Activated CD4-positive, alpha-beta T cell treated with anti-CD3 and anti-CD28 coated beads for 36 hours (primary cell): ENCODE measurements at regions of chr9 and their contacts with region 1.

Region 1: GRCh38 chr9:35945341-35946018 is 12.5 kb downstream of the OR2S2 start:
- DNase-seq: peak; percentile 87
- ATAC-seq: peak; percentile 76
- H3K4me3 Mint-ChIP-seq: no peak overlapping the region
- H3K27ac Mint-ChIP-seq: no peak overlapping the region
- H3K4me1 Mint-ChIP-seq: peaks cover 59% of the 10 kb centered on the region
- H3K27me3 Mint-ChIP-seq: no peaks in the 10 kb centered on the region

Region 2: GRCh38 chr9:35891646-35892045 is 53.8 kb before region 1 on chr9:
- CTCF ChIA-PET with region 1: interaction called, 13 read pairs
- POLR2A ChIA-PET with region 1: no interaction called
- intact Hi-C with region 1: no loop called
- DNase-seq: no peak
- ATAC-seq: no peak
- H3K4me3 Mint-ChIP-seq: no peak overlapping the region
- H3K27ac Mint-ChIP-seq: no peak overlapping the region
- H3K4me1 Mint-ChIP-seq: no peaks in the 10 kb centered on the region
- H3K27me3 Mint-ChIP-seq: peaks cover 7% of the 10 kb centered on the region

Region 3: GRCh38 chr9:35910613-35911359 is 34.7 kb before region 1 on chr9:
- CTCF ChIA-PET with region 1: interaction called, 69 read pairs
- POLR2A ChIA-PET with region 1: interaction called, 3 read pairs
- intact Hi-C with region 1: loop called in 1 of 2 experiments (anchors 2 kb)
- DNase-seq: peak; percentile 71
- ATAC-seq: peak; percentile 75
- H3K4me3 Mint-ChIP-seq: no peak overlapping the region
- H3K27ac Mint-ChIP-seq: peak overlapping the region; percentile 80
- H3K4me1 Mint-ChIP-seq: peaks cover 55% of the 10 kb centered on the region
- H3K27me3 Mint-ChIP-seq: no peaks in the 10 kb centered on the region

Region 4: DNA sequence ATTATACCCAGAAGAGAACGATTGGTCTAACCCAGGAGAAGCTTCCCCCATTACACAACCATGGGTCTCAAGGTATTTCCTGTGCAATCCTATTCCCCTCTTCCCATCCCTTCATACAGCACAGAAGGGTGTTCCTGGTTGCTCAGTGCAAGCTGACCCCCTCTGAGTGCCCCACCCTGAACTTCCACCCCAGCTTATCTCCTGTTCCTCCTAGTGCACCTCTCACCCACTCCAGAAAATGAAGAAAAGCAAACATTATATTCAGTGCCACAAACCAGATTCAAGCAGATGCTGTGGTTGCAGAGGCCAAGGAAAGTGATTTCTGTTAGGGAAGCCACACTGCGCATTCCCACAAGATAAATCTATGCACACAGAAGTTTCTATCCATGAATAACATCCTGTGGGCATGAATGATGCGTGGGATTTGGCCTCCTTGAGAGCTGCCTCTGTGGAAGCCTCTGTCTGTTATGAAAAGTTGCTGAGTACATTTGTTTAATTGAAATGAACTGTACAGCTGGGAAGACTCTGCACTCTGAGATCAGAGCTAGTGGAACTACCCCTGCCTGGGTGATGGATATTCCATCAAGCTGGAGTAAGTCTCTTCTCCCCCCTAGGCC is 14.7 kb after region 1 on chr9:
- CTCF ChIA-PET with region 1: interaction called, 27 read pairs
- POLR2A ChIA-PET with region 1: no interaction called
- intact Hi-C with region 1: no loop called
- DNase-seq: no peak
- ATAC-seq: no peak
- H3K4me3 Mint-ChIP-seq: no peak overlapping the region
- H3K27ac Mint-ChIP-seq: no peak overlapping the region
- H3K4me1 Mint-ChIP-seq: no peaks in the 10 kb centered on the region
- H3K27me3 Mint-ChIP-seq: peaks cover 5% of the 10 kb centered on the region

Region 5: DNA sequence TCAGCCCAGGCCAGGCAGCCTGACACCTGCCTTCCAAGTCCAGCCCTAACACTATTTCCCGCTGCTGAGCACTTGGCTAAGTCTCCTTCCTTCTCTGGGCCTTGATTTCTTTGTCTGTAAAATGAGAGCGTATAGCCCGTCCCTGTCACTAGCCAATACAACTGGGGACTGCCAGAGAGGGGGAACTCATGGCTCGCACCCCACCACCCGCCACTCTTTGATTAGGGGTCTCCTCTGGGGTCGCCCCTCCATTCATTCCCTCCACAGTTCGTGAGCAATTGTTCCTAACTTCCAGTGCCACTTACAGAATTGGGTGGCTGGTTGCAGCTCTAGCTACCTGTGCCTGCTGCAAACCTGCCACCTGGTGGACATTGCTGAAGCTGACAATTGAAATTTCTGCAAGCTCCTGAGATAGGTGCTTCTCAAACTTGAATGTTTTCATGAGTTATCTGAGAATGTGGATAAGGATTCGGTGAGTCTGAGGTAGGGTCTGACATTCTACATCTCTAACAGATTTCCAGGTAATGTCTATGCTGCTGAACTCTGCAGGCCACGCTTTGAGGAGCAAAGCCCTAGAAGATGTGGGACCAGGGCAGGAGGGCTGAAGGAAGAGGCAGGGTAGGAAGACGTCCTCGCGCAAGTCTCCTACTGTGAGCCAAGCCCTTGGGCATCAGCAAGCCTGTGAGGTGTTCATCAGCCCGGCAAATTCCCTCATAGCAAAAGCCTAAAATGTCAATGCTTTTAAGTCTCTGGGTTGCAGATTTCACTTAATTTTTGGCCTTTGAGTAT is 78.0 kb after region 1 on chr9:
- CTCF ChIA-PET with region 1: interaction called, 18 read pairs
- POLR2A ChIA-PET with region 1: no interaction called
- intact Hi-C with region 1: no loop called
- DNase-seq: peak; percentile 83
- ATAC-seq: peak; percentile 90
- H3K4me3 Mint-ChIP-seq: no peak overlapping the region
- H3K27ac Mint-ChIP-seq: no peak overlapping the region
- H3K4me1 Mint-ChIP-seq: no peaks in the 10 kb centered on the region
- H3K27me3 Mint-ChIP-seq: no peaks in the 10 kb centered on the region